ENCODE measurements at regions of chr7 and their contacts with region 1.

Region 1: DNA sequence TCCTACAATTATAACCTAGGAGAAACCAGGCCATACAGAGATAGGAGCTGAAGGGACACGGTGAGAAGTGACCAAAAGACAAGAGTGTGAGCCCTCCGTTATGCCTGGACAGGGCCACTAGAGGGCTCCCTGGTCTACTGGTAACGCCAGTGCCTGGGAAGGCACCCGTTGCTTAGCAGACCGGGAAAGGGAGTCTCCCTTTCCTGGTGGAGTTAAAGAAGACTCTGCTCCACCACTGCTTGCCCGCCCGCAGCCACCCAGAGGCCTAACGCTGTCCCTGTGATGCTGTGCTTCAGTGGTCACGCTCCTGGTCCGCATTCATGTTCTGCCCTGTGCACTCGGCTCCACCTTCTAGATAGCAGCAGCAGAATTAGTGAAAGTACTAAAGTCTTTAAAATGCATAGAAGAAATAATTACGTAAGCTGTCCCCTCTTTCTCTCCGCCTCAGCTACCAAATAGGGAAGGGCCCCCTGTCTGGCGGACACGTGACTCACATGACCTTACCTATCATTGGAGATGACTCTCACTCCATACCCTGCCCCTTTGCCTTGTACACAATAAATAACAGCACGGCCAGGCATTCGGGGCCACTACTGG is 34.8 kb downstream of the GRID2IP start:
- DNase-seq: peak; percentile 65 to 88 (median 84)
- ATAC-seq: peak; percentile 90
- H3K4me3 ChIP-seq: peak overlapping the region in 1 of 2 donors; percentile 18
- H3K27ac ChIP-seq: no peak overlapping the region
- H3K4me1 ChIP-seq: peaks cover 0 to 7% of the 10 kb centered on the region in 2 donors
- H3K27me3 ChIP-seq: peaks cover 0 to 25% of the 10 kb centered on the region in 2 donors
- CTCF ChIP-seq: peak; percentile 86 to 89

Region 2: GRCh38 chr7:6577365-6578113 is 61.1 kb after region 1 on chr7 and contains the start of gene ZDHHC4:
- intact Hi-C with region 1: loop called in 1 of 2 experiments (anchors 10 kb)
- DNase-seq: peak; percentile 86 to 96 (median 92)
- ATAC-seq: peak; percentile 99
- H3K4me3 ChIP-seq: peak within 1 kb of the TSS; percentile 58 to 63
- H3K27ac ChIP-seq: peak within 1 kb of the TSS; percentile 87 to 91
- H3K4me1 ChIP-seq: peaks cover 0 to 10% of the 10 kb centered on the region in 2 donors
- H3K27me3 ChIP-seq: no peaks in the 10 kb centered on the region
- CTCF ChIP-seq: no peak
- polyA plus RNA-seq, gene ZDHHC4: 68.1 to 75.9 (median 71.9) TPM